ENCODE measurements at regions of chr9 and their contacts with region 1.

Region 1: GRCh38 chr9:35161713-35162604 is at the start of gene UNC13B:
- DNase-seq: peak; percentile 82 to 97
- H3K4me3 ChIP-seq: peak within 1 kb of the TSS; percentile 80 to 88
- H3K27ac ChIP-seq: peak within 1 kb of the TSS; percentile 89 to 97
- H3K4me1 ChIP-seq: peaks cover 0 to 10% of the 10 kb centered on the region in 2 donors
- H3K27me3 ChIP-seq: no peaks in the 10 kb centered on the region
- CTCF ChIP-seq: peak in 2 of 3 experiments; percentile 25 to 28
- total RNA-seq, gene UNC13B: 26.5 TPM

Region 2: DNA sequence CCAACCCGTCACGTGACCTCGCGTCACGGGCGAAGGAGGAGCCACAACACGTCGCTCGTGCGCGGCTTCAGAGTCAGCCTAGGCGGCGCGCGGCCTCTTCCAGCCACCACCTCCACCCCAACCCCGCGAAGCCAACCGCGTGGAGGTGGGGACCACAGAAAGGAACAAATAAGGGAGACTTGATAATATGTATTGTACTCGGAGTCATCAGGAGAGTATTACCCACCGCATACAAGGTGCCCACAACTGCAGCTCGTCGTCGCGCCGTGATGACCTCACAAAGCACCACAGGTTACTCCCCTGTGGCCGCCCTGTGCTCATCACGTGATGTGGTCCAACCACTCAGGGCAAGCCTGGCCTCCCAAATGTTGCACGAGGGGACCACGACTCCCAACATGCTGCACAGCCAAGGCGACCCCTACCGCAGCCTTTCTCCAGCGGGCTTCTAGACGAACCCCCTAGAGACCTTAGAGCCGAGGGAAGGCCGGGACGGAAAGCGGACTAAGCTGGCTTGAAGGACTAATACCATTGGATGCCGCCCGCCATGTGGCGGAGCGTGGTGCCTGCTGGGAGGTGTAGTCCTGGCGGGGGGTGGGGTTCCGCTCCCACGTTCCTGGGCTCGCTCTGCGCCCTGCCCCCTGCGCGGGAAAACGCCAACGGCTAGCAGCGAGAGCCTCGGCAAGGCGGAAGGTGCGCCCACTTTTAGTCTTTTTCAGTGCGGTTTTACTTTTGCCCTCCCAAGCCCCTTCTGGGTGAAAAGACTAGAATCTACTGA is 1112.8 kb before region 1 on chr9:
- intact Hi-C with region 1: loop called (anchors 5 kb)
- DNase-seq: peak; percentile 94 to 98
- H3K4me3 ChIP-seq: peak overlapping the region; percentile 95 to 98
- H3K27ac ChIP-seq: peak overlapping the region; percentile 85 to 95
- H3K4me1 ChIP-seq: peaks cover 6 to 9% of the 10 kb centered on the region in 2 donors
- H3K27me3 ChIP-seq: no peaks in the 10 kb centered on the region
- CTCF ChIP-seq: no peak

Region 3: GRCh38 chr9:34646211-34647083 is 515.5 kb before region 1 on chr9 and contains the start of gene GALT:
- intact Hi-C with region 1: loop called (anchors 5 kb)
- DNase-seq: peak; percentile 90 to 97
- H3K4me3 ChIP-seq: peak within 1 kb of the TSS; percentile 69 to 80
- H3K27ac ChIP-seq: peak within 1 kb of the TSS; percentile 80 to 83
- H3K4me1 ChIP-seq: peaks cover 17 to 26% of the 10 kb centered on the region in 2 donors
- H3K27me3 ChIP-seq: no peaks in the 10 kb centered on the region
- CTCF ChIP-seq: peak; percentile 26 to 51 (median 35)
- total RNA-seq, gene GALT: 28.3 TPM

Region 4: GRCh38 chr9:35071814-35072460 is 90.0 kb before region 1 on chr9:
- intact Hi-C with region 1: loop called (anchors 2 kb)
- DNase-seq: peak; percentile 51 to 93
- H3K4me3 ChIP-seq: peak overlapping the region; percentile 79 to 91
- H3K27ac ChIP-seq: peak overlapping the region; percentile 100
- H3K4me1 ChIP-seq: peaks cover 17 to 36% of the 10 kb centered on the region in 2 donors
- H3K27me3 ChIP-seq: no peaks in the 10 kb centered on the region
- CTCF ChIP-seq: peak; percentile 25 to 52 (median 37)

Region 5: DNA sequence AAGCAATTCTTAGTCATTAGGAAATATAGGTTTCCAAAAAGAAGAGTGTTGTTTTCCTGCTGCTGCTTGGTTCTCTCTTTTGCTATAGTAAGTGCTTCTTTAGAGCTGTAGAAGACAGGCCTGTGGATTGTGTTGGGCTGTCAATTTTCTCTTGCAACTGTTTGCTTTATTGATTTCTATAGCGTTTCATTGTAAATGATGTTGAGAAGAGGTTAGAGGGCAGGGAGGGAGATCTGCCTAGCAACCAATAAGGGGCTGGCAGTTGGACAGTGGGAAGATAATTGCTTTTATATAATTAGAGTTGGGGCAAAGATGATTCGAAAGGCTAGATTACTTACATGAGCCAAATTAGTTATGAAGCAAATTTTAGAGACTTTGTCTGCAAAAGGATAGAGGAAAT is 10.9 kb after region 1 on chr9:
- intact Hi-C with region 1: no loop called
- DNase-seq: no peak
- H3K4me3 ChIP-seq: no peak overlapping the region
- H3K27ac ChIP-seq: no peak overlapping the region
- H3K4me1 ChIP-seq: no peaks in the 10 kb centered on the region
- H3K27me3 ChIP-seq: no peaks in the 10 kb centered on the region
- CTCF ChIP-seq: no peak

Region 6: DNA sequence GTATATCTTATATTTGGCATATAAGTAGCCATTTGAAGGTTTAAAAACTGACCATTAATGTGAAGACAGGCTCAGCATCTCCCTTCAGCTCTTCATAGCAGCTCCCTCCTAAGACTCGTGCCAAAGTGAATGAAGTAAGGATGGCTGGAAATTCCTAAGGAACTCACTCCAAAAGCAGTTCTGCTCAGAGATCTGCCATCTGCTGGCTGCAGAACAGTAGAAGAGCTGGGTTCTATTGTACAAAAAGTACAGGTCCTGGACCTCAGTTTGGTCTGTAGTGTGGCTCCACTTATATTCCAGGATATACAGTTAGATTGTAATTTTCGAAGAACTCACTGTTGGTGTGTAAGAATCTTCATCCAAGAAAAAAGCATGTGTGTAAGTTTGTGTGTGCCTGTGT is 223.1 kb after region 1 on chr9:
- intact Hi-C with region 1: loop called (anchors 10 kb)
- DNase-seq: no peak
- H3K4me3 ChIP-seq: no peak overlapping the region
- H3K27ac ChIP-seq: no peak overlapping the region
- H3K4me1 ChIP-seq: no peaks in the 10 kb centered on the region
- H3K27me3 ChIP-seq: no peaks in the 10 kb centered on the region
- CTCF ChIP-seq: peak; percentile 25 to 50 (median 29)

Region 7: DNA sequence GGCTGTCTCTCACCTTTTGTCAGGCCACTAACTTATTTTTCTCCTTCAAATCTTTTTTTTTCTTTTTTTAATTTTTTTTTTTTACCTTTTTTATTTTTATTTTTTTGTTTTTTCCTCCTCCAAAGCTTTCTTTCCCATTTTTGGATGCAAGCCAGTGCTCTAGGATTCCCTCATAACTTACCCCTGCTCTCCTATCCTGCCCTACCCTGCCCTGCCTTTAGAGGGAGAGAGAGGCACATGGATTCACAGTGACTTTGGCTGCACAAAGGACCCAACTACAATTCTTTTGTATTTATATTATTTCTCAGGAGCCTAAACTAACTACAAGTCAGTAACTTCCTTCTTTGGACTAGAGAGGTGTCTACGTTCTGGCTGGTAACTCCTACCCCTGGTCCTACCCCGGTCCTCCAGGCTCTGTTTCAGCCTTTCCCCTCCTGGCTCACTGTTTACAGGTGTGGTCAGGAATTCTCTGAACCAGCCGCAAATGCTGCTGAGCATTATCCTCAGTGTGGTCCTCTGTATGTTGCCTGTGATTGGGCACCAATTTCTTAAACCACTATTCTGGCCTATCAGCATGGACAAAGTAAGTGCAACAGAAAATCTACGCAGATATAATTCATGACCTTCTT is 319.5 kb after region 1 on chr9:
- intact Hi-C with region 1: loop called (anchors 5 kb)
- DNase-seq: peak in 1 of 2 donors; percentile 76
- H3K4me3 ChIP-seq: no peak overlapping the region
- H3K27ac ChIP-seq: peak overlapping the region in 1 of 2 donors; percentile 49
- H3K4me1 ChIP-seq: no peaks in the 10 kb centered on the region
- H3K27me3 ChIP-seq: no peaks in the 10 kb centered on the region
- CTCF ChIP-seq: peak; percentile 53 to 68 (median 65)

Region 8: GRCh38 chr9:35563791-35564197 is 401.8 kb after region 1 on chr9:
- intact Hi-C with region 1: loop called (anchors 5 kb)
- DNase-seq: peak in 1 of 2 donors; percentile 85
- H3K4me3 ChIP-seq: peak overlapping the region; percentile 17 to 19
- H3K27ac ChIP-seq: peak overlapping the region; percentile 83 to 94
- H3K4me1 ChIP-seq: peaks cover 23 to 52% of the 10 kb centered on the region in 2 donors
- H3K27me3 ChIP-seq: no peaks in the 10 kb centered on the region
- CTCF ChIP-seq: no peak

Region 9: DNA sequence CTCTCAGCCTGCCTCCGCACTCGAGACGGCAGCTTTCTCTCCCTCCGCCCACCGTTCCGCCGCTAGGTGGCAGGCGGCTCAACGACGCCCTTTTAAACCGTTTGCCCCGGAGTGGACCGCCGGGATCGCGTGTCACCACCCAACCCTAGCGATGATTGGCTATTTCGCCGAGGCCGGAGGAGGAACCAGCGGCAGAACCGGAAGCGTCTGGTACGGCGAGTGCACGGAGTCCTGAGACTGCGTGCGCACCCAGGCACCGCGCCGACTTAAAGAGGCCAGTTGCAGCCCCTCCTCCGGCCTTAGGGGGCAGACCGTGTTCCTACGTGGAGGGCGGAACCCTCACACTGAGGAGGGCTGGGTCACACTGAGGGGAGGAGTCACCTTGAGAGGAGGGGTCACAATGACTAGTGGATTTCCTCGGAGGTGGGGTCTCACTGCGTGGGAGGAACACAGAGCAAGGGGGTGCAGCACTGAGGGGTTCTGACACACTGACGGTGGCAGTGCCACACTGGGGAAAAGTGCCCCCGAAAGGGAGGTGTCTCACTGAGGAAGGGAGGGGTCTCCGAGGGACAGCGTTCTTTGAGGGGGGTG is 442.1 kb after region 1 on chr9:
- intact Hi-C with region 1: no loop called
- DNase-seq: peak; percentile 98 to 100
- H3K4me3 ChIP-seq: peak overlapping the region; percentile 92 to 97
- H3K27ac ChIP-seq: peak overlapping the region; percentile 93 to 95
- H3K4me1 ChIP-seq: peaks cover 15 to 26% of the 10 kb centered on the region in 2 donors
- H3K27me3 ChIP-seq: no peaks in the 10 kb centered on the region
- CTCF ChIP-seq: peak; percentile 89 to 96 (median 93)

Measured in ascending aorta (tissue), 2 donors.